ENCODE measurements at regions of chr11 and their contacts with region 1.

Region 1: GRCh38 chr11:62905927-62906531 is 15.1 kb downstream of the CHRM1 start:
- DNase-seq: peak; percentile 89
- H3K4me3 Mint-ChIP-seq: no peak overlapping the region
- H3K27ac Mint-ChIP-seq: no peak overlapping the region
- H3K4me1 Mint-ChIP-seq: peaks cover 18% of the 10 kb centered on the region
- H3K27me3 Mint-ChIP-seq: peaks cover 5% of the 10 kb centered on the region

Region 2: DNA sequence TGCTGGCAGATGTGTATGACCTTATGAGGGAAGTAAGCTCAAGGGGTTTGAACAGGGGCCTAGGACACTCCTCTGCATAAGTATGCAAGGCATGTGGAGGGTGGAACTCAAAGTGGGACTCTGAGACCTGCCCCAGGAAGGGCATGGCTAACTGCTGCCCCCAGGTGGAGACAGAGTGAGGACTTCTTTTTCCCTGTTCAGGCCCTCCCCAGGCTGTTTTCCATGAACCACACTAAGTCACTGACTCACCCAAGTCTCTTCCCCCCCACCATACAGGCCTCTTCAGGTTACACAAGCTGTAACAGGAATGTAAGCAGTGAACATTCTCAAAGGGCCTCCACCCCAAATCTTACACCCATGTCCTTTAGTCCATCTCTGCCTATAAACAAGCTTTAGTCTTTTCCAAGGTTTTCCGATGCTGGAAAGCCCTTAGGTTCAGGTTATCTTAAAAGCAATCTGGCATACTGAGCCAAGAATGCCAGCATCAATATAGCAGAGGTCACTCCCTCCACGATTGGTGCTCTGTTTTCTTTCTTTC is 345.4 kb before region 1 on chr11:
- CTCF ChIA-PET with region 1: no interaction called
- intact Hi-C with region 1: no loop called
- DNase-seq: peak; percentile 90
- H3K4me3 Mint-ChIP-seq: no peak overlapping the region
- H3K27ac Mint-ChIP-seq: peak overlapping the region; percentile 77
- H3K4me1 Mint-ChIP-seq: peaks cover 69% of the 10 kb centered on the region
- H3K27me3 Mint-ChIP-seq: no peaks in the 10 kb centered on the region

Region 3: GRCh38 chr11:62922658-62923431 is 16.8 kb after region 1 on chr11:
- CTCF ChIA-PET with region 1: interaction called, 21 read pairs
- intact Hi-C with region 1: loop called (anchors 2 kb)
- DNase-seq: peak; percentile 57
- H3K4me3 Mint-ChIP-seq: peak overlapping the region; percentile 34
- H3K27ac Mint-ChIP-seq: no peak overlapping the region
- H3K4me1 Mint-ChIP-seq: peaks cover 31% of the 10 kb centered on the region
- H3K27me3 Mint-ChIP-seq: peaks cover 53% of the 10 kb centered on the region

Region 4: DNA sequence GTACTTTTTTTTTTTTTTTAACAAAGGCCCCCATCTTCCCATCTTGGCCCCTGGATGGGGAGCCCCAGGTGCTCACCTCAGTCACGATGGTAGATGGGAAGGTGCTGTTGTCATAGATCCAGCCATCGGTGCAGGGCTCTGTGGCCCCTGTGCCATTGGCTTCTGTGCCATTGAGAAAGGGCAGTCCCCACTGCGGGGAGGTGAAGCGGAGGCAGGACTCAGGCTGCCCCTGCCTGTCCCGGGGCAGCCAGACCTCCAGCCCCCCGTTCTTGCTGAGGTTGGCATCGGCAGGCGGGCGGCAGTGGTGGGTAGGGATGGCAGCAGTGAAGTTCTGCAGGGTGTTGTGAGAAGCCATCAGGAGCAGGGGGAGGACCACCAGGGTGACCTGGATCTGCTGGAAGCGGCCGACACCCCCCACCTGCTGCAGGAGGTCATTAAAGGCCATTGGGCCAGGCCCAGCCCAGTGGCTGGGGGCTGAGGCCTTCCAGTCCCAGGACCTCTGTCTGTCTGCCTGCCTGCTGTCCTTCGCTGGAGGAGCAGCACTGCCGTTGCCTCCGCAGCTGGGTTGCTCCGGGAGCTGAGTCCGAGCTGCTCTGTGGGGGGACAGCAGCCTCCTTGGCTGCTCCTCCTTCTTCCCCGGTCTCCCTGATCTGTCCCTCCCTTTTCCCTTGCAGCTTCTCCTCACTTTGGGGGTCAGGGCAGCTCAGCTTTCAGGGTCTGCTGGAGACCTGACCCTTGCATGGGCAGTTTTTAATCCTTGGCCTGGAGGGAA is 78.4 kb after region 1 on chr11 and contains the start of gene SLC22A6:
- CTCF ChIA-PET with region 1: interaction called, 11 read pairs
- intact Hi-C with region 1: no loop called
- DNase-seq: no peak
- H3K4me3 Mint-ChIP-seq: no peak within 1 kb of the TSS
- H3K27ac Mint-ChIP-seq: no peak within 1 kb of the TSS
- H3K4me1 Mint-ChIP-seq: no peaks in the 10 kb centered on the region
- H3K27me3 Mint-ChIP-seq: no peaks in the 10 kb centered on the region
- total RNA-seq, gene SLC22A6: not detected

Region 5: DNA sequence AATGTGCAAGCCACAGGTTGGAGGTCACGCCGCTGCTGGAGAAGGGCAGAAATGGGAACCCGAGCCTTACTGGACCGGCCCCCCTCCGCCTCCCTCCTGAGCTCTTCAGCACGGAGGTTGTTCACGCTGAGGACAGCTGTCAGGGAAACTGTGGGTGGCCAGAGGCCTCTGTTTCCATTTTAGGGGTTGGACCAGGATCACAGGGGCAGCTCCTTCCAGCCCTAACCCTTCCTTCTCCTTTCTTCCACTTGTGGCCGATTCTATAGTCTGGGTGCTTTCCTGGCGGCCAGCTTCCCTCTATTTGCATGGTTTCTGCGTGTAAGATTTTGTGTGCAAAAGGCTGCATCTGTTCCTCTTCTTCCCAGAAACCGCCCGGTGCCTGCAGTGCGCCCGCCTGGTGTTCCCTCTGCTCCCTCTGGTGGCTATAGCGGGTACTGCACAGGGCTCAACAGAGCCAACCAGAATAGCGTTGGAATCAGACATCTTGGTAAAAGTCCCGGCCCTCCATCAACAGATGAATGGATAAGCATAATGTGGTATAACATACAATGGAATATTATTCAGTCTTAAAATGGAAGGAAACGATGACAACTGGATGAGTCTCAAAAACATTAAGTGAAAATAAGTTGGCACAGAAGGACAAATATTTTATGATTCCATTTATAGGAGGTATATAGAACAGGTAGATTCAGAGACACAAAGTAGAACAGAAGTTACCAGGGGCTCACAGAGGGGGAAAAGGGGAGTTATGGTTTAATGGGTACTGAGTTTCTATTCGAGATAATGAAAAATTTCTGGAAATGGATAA is 118.0 kb after region 1 on chr11:
- CTCF ChIA-PET with region 1: interaction called, 397 read pairs
- intact Hi-C with region 1: loop called (anchors 1 kb)
- DNase-seq: peak; percentile 93
- H3K4me3 Mint-ChIP-seq: no peak overlapping the region
- H3K27ac Mint-ChIP-seq: no peak overlapping the region
- H3K4me1 Mint-ChIP-seq: peaks cover 4% of the 10 kb centered on the region
- H3K27me3 Mint-ChIP-seq: peaks cover 2% of the 10 kb centered on the region

Region 6: GRCh38 chr11:63212742-63213141 is 306.7 kb after region 1 on chr11:
- CTCF ChIA-PET with region 1: interaction called, 4 read pairs
- intact Hi-C with region 1: loop called (anchors 5 kb)
- DNase-seq: peak; percentile 31
- H3K4me3 Mint-ChIP-seq: no peak overlapping the region
- H3K27ac Mint-ChIP-seq: no peak overlapping the region
- H3K4me1 Mint-ChIP-seq: no peaks in the 10 kb centered on the region
- H3K27me3 Mint-ChIP-seq: peaks cover 9% of the 10 kb centered on the region